GM12878 (cell line): ENCODE measurements at regions of chr1 and their contacts with region 1.

Region 1: DNA sequence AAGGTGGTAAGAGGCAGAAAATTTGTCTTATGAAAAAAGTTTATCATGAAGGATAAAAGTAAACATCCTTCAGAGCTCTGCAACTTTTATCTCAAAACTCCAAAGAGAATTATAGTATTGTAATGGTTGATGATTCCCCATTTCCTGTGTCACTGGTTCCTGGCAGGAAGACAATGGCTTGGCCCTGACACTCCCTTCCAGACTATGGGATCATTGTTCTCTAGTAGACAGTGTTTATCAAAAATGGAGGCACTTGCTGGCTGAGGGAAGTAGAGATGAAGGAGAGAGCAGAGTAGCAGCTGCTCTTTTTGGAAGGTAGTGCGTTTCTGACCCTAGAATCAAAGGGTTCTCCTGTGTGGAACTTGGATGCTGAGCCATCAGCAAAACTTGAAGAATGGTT is 145.9 kb upstream of the ATP1B1 start:
- DNase-seq: no peak
- ATAC-seq: no peak
- H3K4me3 ChIP-seq: no peak overlapping the region
- H3K27ac ChIP-seq: no peak overlapping the region
- H3K4me1 ChIP-seq: no peaks in the 10 kb centered on the region; the same call in 1 of the 2 replicates
- H3K27me3 ChIP-seq: no peaks in the 10 kb centered on the region
- CTCF ChIP-seq: no peak
- EP300 ChIP-seq: no peak
- POLR2A ChIP-seq: no peak
- RAD21 ChIP-seq: no peak

Region 2: DNA sequence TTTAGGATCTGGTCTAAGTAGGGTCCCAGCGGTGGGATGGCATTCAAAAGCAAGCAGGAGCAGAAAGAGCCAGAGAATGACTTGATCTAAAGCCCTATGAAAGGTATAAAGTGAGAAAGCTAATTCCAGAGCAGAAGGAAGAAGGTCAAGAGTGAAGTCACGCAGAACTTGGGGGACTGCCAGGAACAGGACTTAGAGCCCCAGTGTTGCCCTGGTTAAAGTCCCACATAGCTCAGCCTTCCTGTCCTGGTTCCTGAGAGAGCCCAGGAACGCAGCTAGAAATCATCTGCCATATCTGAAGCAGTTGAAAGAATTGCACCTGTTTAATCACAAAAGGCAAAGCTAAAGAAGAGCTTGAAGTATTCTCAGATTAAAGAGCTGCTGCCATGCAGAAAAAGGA is 14.7 kb before region 1 on chr1:
- CTCF ChIA-PET with region 1: interaction called, 10 read pairs
- POLR2A ChIA-PET with region 1: no interaction called
- RAD21 ChIA-PET with region 1: no interaction called
- SMC1A ChIA-PET with region 1: interaction called, 11 read pairs
- in situ Hi-C with region 1: no loop called
- intact Hi-C with region 1: no loop called
- DNase-seq: no peak
- ATAC-seq: no peak
- H3K4me3 ChIP-seq: no peak overlapping the region
- H3K27ac ChIP-seq: no peak overlapping the region
- H3K4me1 ChIP-seq: no peaks in the 10 kb centered on the region
- H3K27me3 ChIP-seq: no peaks in the 10 kb centered on the region
- CTCF ChIP-seq: no peak
- EP300 ChIP-seq: no peak
- POLR2A ChIP-seq: no peak
- RAD21 ChIP-seq: no peak

Region 3: DNA sequence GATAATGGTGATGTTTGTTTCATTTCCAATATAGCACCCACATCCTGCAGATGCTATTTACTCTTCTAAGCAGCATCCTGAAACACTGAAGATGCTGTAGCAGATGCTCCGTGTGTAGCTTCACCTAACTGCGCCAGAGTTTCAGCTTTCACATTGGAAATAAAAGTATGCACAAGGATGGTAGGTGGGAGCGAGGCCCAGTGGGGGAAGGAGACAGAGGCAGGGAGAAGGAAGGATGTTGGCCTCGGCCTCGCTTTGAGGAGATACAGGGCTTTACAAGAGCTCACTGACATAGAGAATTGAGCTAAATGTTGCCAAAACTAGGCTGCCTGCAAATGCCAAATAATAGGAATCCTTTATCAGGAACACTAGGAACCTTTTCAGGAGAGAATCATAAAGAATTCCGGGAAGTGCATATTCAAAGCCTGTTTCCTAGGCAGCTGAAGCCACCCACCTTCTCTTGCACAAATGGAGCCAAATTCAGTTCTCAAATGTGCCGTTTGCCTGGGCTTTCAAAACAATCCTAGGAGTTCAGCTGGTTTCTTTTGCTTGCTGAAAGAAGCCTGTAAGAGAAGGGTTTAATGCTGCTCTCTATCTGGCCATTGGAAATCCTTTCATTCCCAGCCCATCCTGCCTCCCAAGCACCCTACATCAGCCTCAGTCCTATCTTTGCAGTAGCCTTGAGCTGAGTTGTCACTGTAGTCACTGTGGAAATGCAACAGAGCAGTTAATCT is 10.5 kb after region 1 on chr1:
- CTCF ChIA-PET with region 1: no interaction called
- POLR2A ChIA-PET with region 1: no interaction called
- RAD21 ChIA-PET with region 1: interaction called, 4 read pairs
- SMC1A ChIA-PET with region 1: interaction called, 16 read pairs
- in situ Hi-C with region 1: no loop called
- intact Hi-C with region 1: no loop called
- DNase-seq: no peak
- ATAC-seq: no peak
- H3K4me3 ChIP-seq: no peak overlapping the region
- H3K27ac ChIP-seq: no peak overlapping the region
- H3K4me1 ChIP-seq: no peaks in the 10 kb centered on the region
- H3K27me3 ChIP-seq: no peaks in the 10 kb centered on the region
- CTCF ChIP-seq: no peak
- EP300 ChIP-seq: no peak
- POLR2A ChIP-seq: no peak
- RAD21 ChIP-seq: no peak